Caco-2 (cell line): ENCODE measurements at regions of chr2 and their contacts with region 1.

Region 1: DNA sequence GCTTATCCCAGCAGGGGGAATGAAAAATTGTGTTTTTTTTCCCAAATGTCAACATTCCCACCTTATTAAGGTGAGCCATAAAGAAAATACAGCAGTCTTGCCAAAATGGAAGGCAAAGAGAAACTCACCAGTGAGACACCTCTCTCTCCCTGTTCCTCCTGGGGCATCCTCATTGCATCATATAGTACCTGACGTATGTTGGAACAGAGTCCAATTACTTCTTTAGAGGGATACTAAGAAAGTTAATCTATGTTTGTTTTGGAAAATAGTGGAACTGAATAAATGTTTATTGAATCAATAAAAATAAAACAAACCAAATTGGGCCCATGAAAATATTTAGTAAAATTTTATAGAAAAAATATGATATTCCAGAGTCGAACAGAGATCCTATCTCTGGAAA is 700.4 kb downstream of the LRRTM4 start:
- DNase-seq: no peak
- H3K4me3 ChIP-seq: no peak overlapping the region
- H3K4me3 Mint-ChIP-seq: no peak overlapping the region
- H3K27ac Mint-ChIP-seq: no peak overlapping the region
- H3K4me1 ChIP-seq: no peaks in the 10 kb centered on the region
- H3K4me1 Mint-ChIP-seq: no peaks in the 10 kb centered on the region
- H3K27me3 ChIP-seq: no peaks in the 10 kb centered on the region
- H3K27me3 Mint-ChIP-seq: no peaks in the 10 kb centered on the region
- CTCF ChIP-seq: no peak

Region 2: GRCh38 chr2:76448936-76449335 is 372.8 kb before region 1 on chr2:
- CTCF ChIA-PET with region 1: no interaction called
- POLR2A ChIA-PET with region 1: no interaction called
- intact Hi-C with region 1: no loop called
- DNase-seq: no peak
- H3K4me3 ChIP-seq: no peak overlapping the region
- H3K4me3 Mint-ChIP-seq: no peak overlapping the region
- H3K27ac Mint-ChIP-seq: no peak overlapping the region
- H3K4me1 ChIP-seq: no peaks in the 10 kb centered on the region
- H3K4me1 Mint-ChIP-seq: no peaks in the 10 kb centered on the region
- H3K27me3 ChIP-seq: no peaks in the 10 kb centered on the region
- H3K27me3 Mint-ChIP-seq: peaks cover 4% of the 10 kb centered on the region
- CTCF ChIP-seq: no peak

Region 3: DNA sequence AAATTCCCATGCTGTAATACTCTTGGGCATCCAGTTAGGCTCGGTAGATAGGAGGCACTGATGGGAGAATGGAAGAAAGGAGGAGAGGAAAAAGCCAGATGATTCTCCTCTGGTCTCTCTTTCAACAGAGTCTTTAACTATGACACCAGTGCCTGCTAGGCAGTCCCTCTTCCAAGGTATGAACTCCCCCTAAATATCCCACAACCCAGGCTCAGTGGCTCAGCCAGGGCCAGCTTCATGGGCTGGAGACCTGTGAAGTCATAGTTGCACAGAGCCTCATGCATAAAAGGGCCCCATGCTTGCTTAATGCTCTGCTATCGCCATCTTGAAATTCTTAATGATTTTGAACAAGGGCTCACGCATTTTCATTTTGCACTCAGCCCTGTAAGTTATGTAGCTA is 241.8 kb before region 1 on chr2:
- CTCF ChIA-PET with region 1: no interaction called
- POLR2A ChIA-PET with region 1: no interaction called
- intact Hi-C with region 1: no loop called
- DNase-seq: no peak
- H3K4me3 ChIP-seq: no peak overlapping the region
- H3K4me3 Mint-ChIP-seq: no peak overlapping the region
- H3K27ac Mint-ChIP-seq: no peak overlapping the region
- H3K4me1 ChIP-seq: no peaks in the 10 kb centered on the region
- H3K4me1 Mint-ChIP-seq: no peaks in the 10 kb centered on the region
- H3K27me3 ChIP-seq: no peaks in the 10 kb centered on the region
- H3K27me3 Mint-ChIP-seq: peaks cover 21% of the 10 kb centered on the region
- CTCF ChIP-seq: no peak

Region 4: GRCh38 chr2:76808551-76809131 is 13.1 kb before region 1 on chr2:
- CTCF ChIA-PET with region 1: no interaction called
- POLR2A ChIA-PET with region 1: no interaction called
- intact Hi-C with region 1: loop called (anchors 1 kb)
- DNase-seq: no peak
- H3K4me3 ChIP-seq: no peak overlapping the region
- H3K4me3 Mint-ChIP-seq: no peak overlapping the region
- H3K27ac Mint-ChIP-seq: no peak overlapping the region
- H3K4me1 ChIP-seq: no peaks in the 10 kb centered on the region
- H3K4me1 Mint-ChIP-seq: no peaks in the 10 kb centered on the region
- H3K27me3 ChIP-seq: no peaks in the 10 kb centered on the region
- H3K27me3 Mint-ChIP-seq: no peaks in the 10 kb centered on the region
- CTCF ChIP-seq: no peak

Region 5: DNA sequence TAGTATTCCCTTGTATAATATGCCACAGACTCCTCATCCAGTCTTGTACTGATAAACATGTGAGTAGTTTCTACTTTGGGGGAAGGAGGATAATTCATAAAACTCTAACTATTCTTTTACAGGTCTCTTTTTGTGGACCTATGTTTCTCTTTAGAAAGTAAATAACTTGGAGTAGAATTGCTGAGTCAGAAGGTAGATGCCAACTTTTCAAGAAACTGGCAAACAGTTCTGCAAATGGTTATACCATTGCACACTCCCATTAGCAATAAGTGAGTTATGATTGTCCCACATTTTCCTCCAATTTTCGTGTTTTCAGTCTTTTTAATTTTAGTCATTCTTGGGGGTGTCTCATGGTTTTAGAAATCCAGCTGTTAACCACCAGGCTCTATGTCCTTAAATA is 1177.6 kb after region 1 on chr2:
- CTCF ChIA-PET with region 1: no interaction called
- POLR2A ChIA-PET with region 1: no interaction called
- intact Hi-C with region 1: no loop called
- DNase-seq: no peak
- H3K4me3 ChIP-seq: no peak overlapping the region
- H3K4me3 Mint-ChIP-seq: no peak overlapping the region
- H3K27ac Mint-ChIP-seq: no peak overlapping the region
- H3K4me1 ChIP-seq: no peaks in the 10 kb centered on the region
- H3K4me1 Mint-ChIP-seq: no peaks in the 10 kb centered on the region
- H3K27me3 ChIP-seq: no peaks in the 10 kb centered on the region
- H3K27me3 Mint-ChIP-seq: no peaks in the 10 kb centered on the region
- CTCF ChIP-seq: no peak

Region 6: GRCh38 chr2:78115291-78116082 is 1293.8 kb after region 1 on chr2:
- CTCF ChIA-PET with region 1: no interaction called
- POLR2A ChIA-PET with region 1: no interaction called
- intact Hi-C with region 1: no loop called
- DNase-seq: peak in 1 of 2 experiments; percentile 20
- H3K4me3 ChIP-seq: no peak overlapping the region
- H3K4me3 Mint-ChIP-seq: no peak overlapping the region
- H3K27ac Mint-ChIP-seq: no peak overlapping the region
- H3K4me1 ChIP-seq: no peaks in the 10 kb centered on the region
- H3K4me1 Mint-ChIP-seq: peaks cover 6% of the 10 kb centered on the region
- H3K27me3 ChIP-seq: no peaks in the 10 kb centered on the region
- H3K27me3 Mint-ChIP-seq: no peaks in the 10 kb centered on the region
- CTCF ChIP-seq: peak; percentile 44